CD8-positive, alpha-beta T cell (primary cell): ENCODE measurements at regions of chr14 and their contacts with region 1.

Region 1: GRCh38 chr14:61837336-61838229 is 75.4 kb downstream of the SNAPC1 start:
- DNase-seq: peak; percentile 42 to 86 (median 75)
- ATAC-seq: peak; percentile 99
- H3K4me3 ChIP-seq: no peak overlapping the region
- H3K4me3 Mint-ChIP-seq: no peak overlapping the region
- H3K27ac ChIP-seq: no peak overlapping the region
- H3K27ac Mint-ChIP-seq: no peak overlapping the region
- H3K4me1 ChIP-seq: no peaks in the 10 kb centered on the region
- H3K4me1 Mint-ChIP-seq: no peaks in the 10 kb centered on the region
- H3K27me3 ChIP-seq: no peaks in the 10 kb centered on the region
- H3K27me3 Mint-ChIP-seq: peaks cover 2% of the 10 kb centered on the region
- CTCF ChIP-seq: peak; percentile 86

Region 2: DNA sequence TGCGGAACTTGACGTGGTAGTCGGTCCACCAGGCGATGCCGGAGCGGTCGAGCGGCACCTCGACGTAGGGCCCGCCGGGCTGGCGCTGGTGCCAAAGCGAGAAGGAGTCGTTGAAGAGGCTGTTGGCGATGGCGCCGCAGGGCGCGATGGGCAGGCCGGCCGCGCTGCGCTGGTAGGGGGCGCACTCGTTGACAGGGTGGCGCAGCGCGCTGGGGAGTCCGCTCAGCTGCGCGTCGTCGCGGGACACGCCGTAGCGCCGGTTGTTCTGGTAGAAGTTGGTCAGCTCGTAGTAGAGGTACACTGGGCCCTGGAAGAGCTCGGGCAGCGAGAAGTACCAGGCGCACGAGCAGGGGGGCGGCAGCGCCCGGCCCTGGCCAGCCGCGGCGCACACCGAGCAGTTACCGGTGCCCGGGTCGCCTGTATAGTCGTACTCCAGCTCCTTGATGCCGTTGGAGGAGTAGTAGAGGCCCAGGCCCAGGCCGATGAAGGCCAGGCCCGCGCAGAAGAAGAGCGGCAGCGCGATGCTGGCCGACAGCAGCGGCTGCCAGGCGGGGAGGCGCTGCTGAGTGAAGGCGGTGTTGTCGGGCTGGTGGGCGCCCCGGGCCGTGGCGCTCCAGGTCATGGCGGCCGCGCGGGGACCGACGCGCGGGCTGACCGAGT is 556.9 kb before region 1 on chr14:
- CTCF ChIA-PET with region 1: interaction called, 11 read pairs
- POLR2A ChIA-PET with region 1: interaction called, 5 read pairs
- intact Hi-C with region 1: loop called in 1 of 2 experiments (anchors 1 kb)
- DNase-seq: peak; percentile 63 to 90 (median 79)
- ATAC-seq: peak; percentile 85
- H3K4me3 ChIP-seq: peak overlapping the region; percentile 64 to 66
- H3K4me3 Mint-ChIP-seq: peak overlapping the region; percentile 93
- H3K27ac ChIP-seq: peak overlapping the region; percentile 71 to 82
- H3K27ac Mint-ChIP-seq: peak overlapping the region; percentile 95
- H3K4me1 ChIP-seq: peaks cover 15% of the 10 kb centered on the region
- H3K4me1 Mint-ChIP-seq: peaks cover 33% of the 10 kb centered on the region
- H3K27me3 ChIP-seq: no peaks in the 10 kb centered on the region
- H3K27me3 Mint-ChIP-seq: peaks cover 1% of the 10 kb centered on the region
- CTCF ChIP-seq: peak; percentile 62

Region 3: GRCh38 chr14:61461808-61462275 is 375.7 kb before region 1 on chr14:
- CTCF ChIA-PET with region 1: interaction called, 40 read pairs
- POLR2A ChIA-PET with region 1: no interaction called
- intact Hi-C with region 1: loop called (anchors 1 to 2 kb)
- DNase-seq: peak in 5 of 9 experiments; percentile 27 to 81 (median 49)
- ATAC-seq: peak; percentile 53
- H3K4me3 ChIP-seq: no peak overlapping the region
- H3K4me3 Mint-ChIP-seq: peak overlapping the region; percentile 37
- H3K27ac ChIP-seq: peak overlapping the region; percentile 0 to 61
- H3K27ac Mint-ChIP-seq: peak overlapping the region; percentile 97
- H3K4me1 ChIP-seq: peaks cover 30% of the 10 kb centered on the region
- H3K4me1 Mint-ChIP-seq: peaks cover 70% of the 10 kb centered on the region
- H3K27me3 ChIP-seq: no peaks in the 10 kb centered on the region
- H3K27me3 Mint-ChIP-seq: no peaks in the 10 kb centered on the region
- CTCF ChIP-seq: peak; percentile 89

Region 4: DNA sequence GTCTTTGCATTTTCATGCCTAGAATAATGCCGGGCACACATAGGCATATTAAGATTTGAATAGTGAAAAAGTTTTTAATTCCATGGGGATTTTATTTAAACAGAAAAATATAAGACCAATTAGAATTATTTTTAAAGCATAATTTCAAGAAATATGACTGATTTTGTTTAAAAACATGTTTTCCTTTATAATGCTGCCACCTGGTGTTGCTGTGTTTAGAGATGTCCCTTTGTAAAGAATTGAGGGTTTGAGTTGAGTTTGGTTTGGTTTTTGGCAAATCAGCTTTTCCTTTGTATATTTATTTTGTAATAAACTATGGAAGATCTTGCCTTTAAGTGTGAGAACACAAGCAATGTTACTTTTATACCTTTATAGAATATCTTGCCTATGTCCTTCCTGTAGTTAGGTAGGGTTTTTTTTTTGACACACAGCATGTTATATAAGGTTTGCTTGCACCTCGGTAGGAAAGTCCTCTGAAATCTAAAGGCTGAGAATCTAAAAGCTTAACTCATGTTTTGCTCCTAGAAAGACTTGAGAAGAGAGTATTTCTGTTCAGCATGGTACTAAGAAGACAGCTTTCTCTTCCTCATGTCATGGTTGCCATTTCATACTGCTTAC is 106.7 kb before region 1 on chr14:
- CTCF ChIA-PET with region 1: interaction called, 11 read pairs
- POLR2A ChIA-PET with region 1: no interaction called
- intact Hi-C with region 1: loop called (anchors 5 kb)
- DNase-seq: peak in 3 of 9 experiments; percentile 19 to 58 (median 51)
- ATAC-seq: no peak
- H3K4me3 ChIP-seq: no peak overlapping the region
- H3K4me3 Mint-ChIP-seq: no peak overlapping the region
- H3K27ac ChIP-seq: no peak overlapping the region
- H3K27ac Mint-ChIP-seq: peak overlapping the region; percentile 42
- H3K4me1 ChIP-seq: peaks cover 3% of the 10 kb centered on the region
- H3K4me1 Mint-ChIP-seq: peaks cover 20% of the 10 kb centered on the region
- H3K27me3 ChIP-seq: no peaks in the 10 kb centered on the region
- H3K27me3 Mint-ChIP-seq: no peaks in the 10 kb centered on the region
- CTCF ChIP-seq: peak; percentile 73

Region 5: GRCh38 chr14:61761959-61762786 is 75.4 kb before region 1 on chr14 and contains the start of gene SNAPC1:
- CTCF ChIA-PET with region 1: interaction called, 8 read pairs
- POLR2A ChIA-PET with region 1: interaction called, 5 read pairs
- intact Hi-C with region 1: loop called in 1 of 2 experiments (anchors 5 kb)
- DNase-seq: peak; percentile 96 to 100 (median 98)
- ATAC-seq: peak; percentile 91
- H3K4me3 ChIP-seq: peak within 1 kb of the TSS; percentile 87 to 90
- H3K4me3 Mint-ChIP-seq: peak within 1 kb of the TSS; percentile 98
- H3K27ac ChIP-seq: peak within 1 kb of the TSS; percentile 84 to 95
- H3K27ac Mint-ChIP-seq: peak within 1 kb of the TSS; percentile 100
- H3K4me1 ChIP-seq: peaks cover 31% of the 10 kb centered on the region
- H3K4me1 Mint-ChIP-seq: peaks cover 48% of the 10 kb centered on the region
- H3K27me3 ChIP-seq: no peaks in the 10 kb centered on the region
- H3K27me3 Mint-ChIP-seq: no peaks in the 10 kb centered on the region
- CTCF ChIP-seq: no peak
- total RNA-seq, gene SNAPC1: 6.8 to 7.4 TPM

Region 6: GRCh38 chr14:62081012-62081612 is 243.5 kb after region 1 on chr14:
- CTCF ChIA-PET with region 1: no interaction called
- POLR2A ChIA-PET with region 1: no interaction called
- intact Hi-C with region 1: no loop called
- DNase-seq: no peak
- ATAC-seq: no peak
- H3K4me3 ChIP-seq: no peak overlapping the region
- H3K4me3 Mint-ChIP-seq: no peak overlapping the region
- H3K27ac ChIP-seq: no peak overlapping the region
- H3K27ac Mint-ChIP-seq: no peak overlapping the region
- H3K4me1 ChIP-seq: peaks cover 25% of the 10 kb centered on the region
- H3K4me1 Mint-ChIP-seq: peaks cover 40% of the 10 kb centered on the region
- H3K27me3 ChIP-seq: no peaks in the 10 kb centered on the region
- H3K27me3 Mint-ChIP-seq: peaks cover 2% of the 10 kb centered on the region
- CTCF ChIP-seq: no peak